Activated CD8-positive, alpha-beta T cell treated with anti-CD3 and anti-CD28 coated beads for 36 hours (primary cell): ENCODE measurements at regions of chr9 and their contacts with region 1.

Region 1: DNA sequence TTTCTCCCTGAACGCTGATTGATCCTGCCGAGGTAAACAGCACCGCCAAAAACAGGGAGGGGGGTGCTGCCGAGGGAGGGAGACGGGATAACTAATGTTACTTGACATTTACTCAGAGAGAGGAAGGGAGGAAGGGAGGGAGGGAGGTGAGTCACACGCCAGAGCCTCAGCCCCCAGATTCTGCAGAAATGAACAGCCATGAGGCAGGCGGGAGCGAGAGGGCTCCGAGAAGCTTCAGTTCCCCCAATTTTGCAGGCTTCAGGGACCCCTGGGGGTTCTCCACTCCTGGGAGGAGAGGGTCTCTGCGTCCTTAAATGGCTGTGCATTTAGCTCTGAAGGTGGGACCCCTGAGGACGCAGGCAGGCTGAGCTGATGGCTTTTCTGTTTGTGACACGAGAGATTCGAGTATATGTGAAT is 59.1 kb upstream of the IER5L start:
- DNase-seq: peak; percentile 87
- ATAC-seq: peak; percentile 79
- H3K4me3 Mint-ChIP-seq: peak overlapping the region; percentile 78
- H3K27ac Mint-ChIP-seq: peak overlapping the region; percentile 96
- H3K4me1 Mint-ChIP-seq: peaks cover 63% of the 10 kb centered on the region
- H3K27me3 Mint-ChIP-seq: no peaks in the 10 kb centered on the region
- CTCF ChIP-seq: no peak

Region 2: GRCh38 chr9:128972956-128973355 is 264.2 kb before region 1 on chr9:
- CTCF ChIA-PET with region 1: no interaction called
- POLR2A ChIA-PET with region 1: no interaction called
- intact Hi-C with region 1: no loop called
- DNase-seq: no peak
- ATAC-seq: no peak
- H3K4me3 Mint-ChIP-seq: no peak overlapping the region
- H3K27ac Mint-ChIP-seq: no peak overlapping the region
- H3K4me1 Mint-ChIP-seq: no peaks in the 10 kb centered on the region
- H3K27me3 Mint-ChIP-seq: no peaks in the 10 kb centered on the region
- CTCF ChIP-seq: no peak

Region 3: DNA sequence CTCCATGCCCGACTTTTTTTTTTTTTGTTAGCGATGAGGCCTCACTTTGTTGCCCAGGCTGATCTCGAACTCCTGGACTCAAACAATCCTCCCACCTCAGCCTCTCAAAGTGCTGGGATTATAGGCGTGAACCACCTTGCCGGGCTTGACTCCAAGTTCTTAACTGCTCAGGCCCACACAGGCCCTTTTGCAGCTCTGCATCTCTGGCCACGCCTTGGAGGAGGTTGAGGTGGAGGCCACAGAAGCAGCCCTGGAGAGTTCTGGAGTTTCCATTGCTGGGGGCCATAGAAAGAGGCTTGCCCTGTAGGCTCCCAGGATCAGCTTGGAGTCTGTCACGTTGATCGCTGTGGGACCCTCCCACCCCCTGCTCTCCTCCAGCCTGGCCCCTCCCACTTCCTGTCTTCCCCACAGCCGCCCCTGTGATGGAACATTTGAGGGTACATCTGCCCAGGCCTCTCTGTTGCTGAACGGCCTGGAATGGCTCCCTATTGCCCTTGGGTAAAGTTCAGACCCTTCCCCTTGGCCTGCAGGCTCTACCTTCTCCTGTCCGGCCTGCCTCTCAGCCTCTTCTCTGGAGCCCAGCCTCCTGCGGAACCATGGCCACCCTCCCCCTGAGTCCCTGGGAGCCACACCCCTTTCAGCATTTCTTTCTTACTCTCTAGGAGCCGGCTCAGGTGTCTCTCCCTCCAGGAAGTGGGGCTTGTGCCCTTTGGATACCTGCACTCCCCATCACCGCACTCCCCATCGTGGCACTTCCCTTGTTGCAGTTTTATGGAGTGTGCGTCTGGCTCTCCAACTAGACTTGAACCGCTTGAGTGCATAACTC is 28.8 kb before region 1 on chr9:
- CTCF ChIA-PET with region 1: interaction called, 6 read pairs
- POLR2A ChIA-PET with region 1: interaction called, 14 read pairs
- intact Hi-C with region 1: no loop called
- DNase-seq: peak; percentile 88
- ATAC-seq: peak; percentile 92
- H3K4me3 Mint-ChIP-seq: peak overlapping the region; percentile 74
- H3K27ac Mint-ChIP-seq: peak overlapping the region; percentile 96
- H3K4me1 Mint-ChIP-seq: peaks cover 35% of the 10 kb centered on the region
- H3K27me3 Mint-ChIP-seq: no peaks in the 10 kb centered on the region
- CTCF ChIP-seq: no peak

Region 4: DNA sequence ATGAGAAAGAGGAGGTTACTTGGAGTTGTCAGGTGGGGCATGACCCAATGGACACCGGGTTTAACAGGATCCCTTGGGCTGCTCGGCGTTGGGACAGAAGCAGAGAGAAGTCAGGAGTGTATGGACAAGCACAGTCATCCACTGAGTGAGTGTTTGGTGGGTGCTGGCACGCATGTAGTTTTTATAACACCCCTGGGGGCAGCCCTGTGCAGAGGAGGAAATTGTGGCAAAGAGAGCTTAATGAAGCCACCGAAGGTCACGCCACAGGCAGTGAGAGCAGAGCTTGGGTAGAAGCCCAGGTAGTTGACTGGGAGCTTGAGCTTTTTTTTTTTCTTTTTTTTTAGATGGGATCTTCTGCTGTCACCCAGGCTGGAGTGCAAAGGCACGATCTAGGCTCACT is 16.0 kb before region 1 on chr9:
- CTCF ChIA-PET with region 1: interaction called, 12 read pairs
- POLR2A ChIA-PET with region 1: interaction called, 10 read pairs
- intact Hi-C with region 1: no loop called
- DNase-seq: peak; percentile 82
- ATAC-seq: peak; percentile 90
- H3K4me3 Mint-ChIP-seq: no peak overlapping the region
- H3K27ac Mint-ChIP-seq: peak overlapping the region; percentile 41
- H3K4me1 Mint-ChIP-seq: peaks cover 42% of the 10 kb centered on the region
- H3K27me3 Mint-ChIP-seq: no peaks in the 10 kb centered on the region
- CTCF ChIP-seq: no peak

Region 5: GRCh38 chr9:129284373-129285291 is 47.4 kb after region 1 on chr9:
- CTCF ChIA-PET with region 1: no interaction called
- POLR2A ChIA-PET with region 1: no interaction called
- intact Hi-C with region 1: no loop called
- DNase-seq: no peak
- ATAC-seq: no peak
- H3K4me3 Mint-ChIP-seq: no peak overlapping the region
- H3K27ac Mint-ChIP-seq: no peak overlapping the region
- H3K4me1 Mint-ChIP-seq: no peaks in the 10 kb centered on the region
- H3K27me3 Mint-ChIP-seq: no peaks in the 10 kb centered on the region
- CTCF ChIP-seq: no peak